CD4-positive, alpha-beta T cell (primary cell): ENCODE measurements at regions of chr7 and their contacts with region 1.

Region 1: DNA sequence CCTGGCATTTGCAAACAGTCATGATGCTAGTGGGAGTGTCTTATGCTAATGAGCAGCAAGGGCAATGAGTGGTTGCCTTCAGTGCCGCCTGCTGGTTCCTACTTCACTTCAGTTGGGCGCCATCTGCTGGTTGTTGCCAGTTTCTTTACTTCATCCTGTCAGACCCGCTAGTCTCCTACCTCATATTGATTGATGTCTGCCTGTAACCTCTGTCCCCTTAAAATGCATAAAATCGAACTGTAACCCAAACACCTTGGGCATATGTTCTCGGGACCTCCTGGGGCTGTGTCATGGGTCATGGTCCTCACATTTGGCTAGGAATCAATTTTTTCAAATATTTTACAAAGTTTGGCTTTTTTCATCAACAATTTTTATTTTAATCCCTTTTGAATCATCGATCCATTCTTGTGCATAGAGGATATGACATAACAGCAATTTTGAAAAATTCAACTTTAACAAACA is 62.8 kb upstream of the C7orf33 start:
- DNase-seq: peak; percentile 63 to 93 (median 78)
- ATAC-seq: peak; percentile 99
- H3K4me3 ChIP-seq: no peak overlapping the region
- H3K4me3 Mint-ChIP-seq: no peak overlapping the region
- H3K27ac ChIP-seq: no peak overlapping the region
- H3K27ac Mint-ChIP-seq: no peak overlapping the region
- H3K4me1 ChIP-seq: no peaks in the 10 kb centered on the region
- H3K4me1 Mint-ChIP-seq: peaks cover 7% of the 10 kb centered on the region
- H3K27me3 ChIP-seq: no peaks in the 10 kb centered on the region
- H3K27me3 Mint-ChIP-seq: peaks cover 43% of the 10 kb centered on the region
- CTCF ChIP-seq: peak; percentile 73

Region 2: DNA sequence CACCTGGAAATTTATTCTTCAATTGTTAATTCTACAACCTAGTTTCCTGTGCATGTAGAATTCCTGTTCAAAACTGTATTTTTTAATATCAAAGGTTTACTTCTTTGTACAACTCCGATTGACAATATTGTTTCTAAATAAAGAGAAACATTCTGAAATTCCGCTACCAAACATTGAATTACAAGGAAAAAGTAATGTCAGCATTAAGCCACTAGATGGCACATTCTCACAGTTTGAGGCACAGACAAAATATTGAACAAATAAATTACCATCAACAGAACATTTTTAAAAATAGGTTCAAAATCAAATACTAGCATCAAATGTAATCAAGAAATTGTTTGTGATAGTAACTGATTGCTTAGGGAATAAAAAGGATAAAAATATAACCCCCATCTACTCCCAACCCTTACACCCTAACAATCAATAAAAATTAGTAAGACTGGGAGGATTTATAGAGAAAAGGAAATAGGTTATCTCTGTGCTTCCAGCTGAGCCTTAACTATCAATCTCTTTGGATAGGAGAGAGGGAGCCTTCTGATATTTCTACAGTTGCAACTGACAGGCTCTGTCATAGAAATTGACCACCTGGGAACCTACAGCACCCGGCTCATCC is 23.8 kb before region 1 on chr7:
- CTCF ChIA-PET with region 1: no interaction called
- POLR2A ChIA-PET with region 1: no interaction called
- intact Hi-C with region 1: loop called in 1 of 2 experiments (anchors 1 kb)
- DNase-seq: peak in 3 of 14 experiments; percentile 55 to 66 (median 62)
- ATAC-seq: no peak
- H3K4me3 ChIP-seq: no peak overlapping the region
- H3K4me3 Mint-ChIP-seq: no peak overlapping the region
- H3K27ac ChIP-seq: no peak overlapping the region
- H3K27ac Mint-ChIP-seq: no peak overlapping the region
- H3K4me1 ChIP-seq: no peaks in the 10 kb centered on the region
- H3K4me1 Mint-ChIP-seq: peaks cover 7% of the 10 kb centered on the region
- H3K27me3 ChIP-seq: peaks cover 0 to 13% of the 10 kb centered on the region in 2 experiments
- H3K27me3 Mint-ChIP-seq: peaks cover 17% of the 10 kb centered on the region
- CTCF ChIP-seq: peak; percentile 90

Region 3: DNA sequence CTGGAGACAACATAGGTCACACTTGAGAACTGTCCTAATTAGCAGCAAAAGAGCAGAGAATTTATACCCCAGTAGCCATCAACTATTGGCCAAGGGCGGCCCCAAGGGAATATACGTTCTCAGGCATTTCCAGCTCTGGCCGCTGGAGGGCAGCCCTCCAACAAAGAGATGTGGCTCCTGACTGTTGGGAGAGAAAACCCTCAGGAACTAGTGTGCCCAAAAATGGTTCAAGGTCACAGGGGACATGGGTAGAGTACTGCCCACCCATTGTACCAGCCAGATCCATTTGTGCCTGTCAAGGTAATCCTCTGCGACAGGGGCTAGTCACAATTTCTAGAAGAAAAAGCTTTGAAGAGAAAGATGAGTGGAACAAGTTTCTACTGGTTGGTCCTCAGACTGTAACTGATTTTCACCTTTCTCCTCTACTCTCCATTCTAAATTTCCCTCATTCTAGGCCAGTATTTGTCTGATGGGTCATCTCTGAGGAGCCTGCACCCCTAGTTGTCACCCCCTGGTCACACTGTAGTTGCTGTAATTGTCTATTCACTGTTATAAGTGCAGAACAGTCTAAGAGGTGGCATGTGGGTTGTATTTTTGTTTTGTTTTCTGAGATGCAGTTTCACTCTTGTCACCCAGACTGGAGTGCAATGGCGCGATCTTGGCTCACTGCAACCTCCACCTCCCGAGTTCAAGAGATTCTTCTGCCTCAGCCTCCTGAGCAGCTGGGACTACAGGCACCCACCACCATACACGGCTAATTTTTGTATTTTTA is 48.1 kb after region 1 on chr7:
- CTCF ChIA-PET with region 1: no interaction called
- POLR2A ChIA-PET with region 1: no interaction called
- intact Hi-C with region 1: no loop called
- DNase-seq: peak; percentile 50 to 79 (median 64)
- ATAC-seq: peak; percentile 81
- H3K4me3 ChIP-seq: no peak overlapping the region
- H3K4me3 Mint-ChIP-seq: no peak overlapping the region
- H3K27ac ChIP-seq: no peak overlapping the region
- H3K27ac Mint-ChIP-seq: no peak overlapping the region
- H3K4me1 ChIP-seq: peaks cover 5% of the 10 kb centered on the region
- H3K4me1 Mint-ChIP-seq: peaks cover 4% of the 10 kb centered on the region
- H3K27me3 ChIP-seq: no peaks in the 10 kb centered on the region
- H3K27me3 Mint-ChIP-seq: no peaks in the 10 kb centered on the region
- CTCF ChIP-seq: peak; percentile 82